Left cardiac atrium (tissue), 4 donors: ENCODE measurements at regions of chr17 and their contacts with region 1.

Region 1: GRCh38 chr17:10135539-10136257 is 62.7 kb downstream of the GAS7 start:
- DNase-seq: peak; percentile 65
- ATAC-seq: peak; percentile 65 to 79

Region 2: DNA sequence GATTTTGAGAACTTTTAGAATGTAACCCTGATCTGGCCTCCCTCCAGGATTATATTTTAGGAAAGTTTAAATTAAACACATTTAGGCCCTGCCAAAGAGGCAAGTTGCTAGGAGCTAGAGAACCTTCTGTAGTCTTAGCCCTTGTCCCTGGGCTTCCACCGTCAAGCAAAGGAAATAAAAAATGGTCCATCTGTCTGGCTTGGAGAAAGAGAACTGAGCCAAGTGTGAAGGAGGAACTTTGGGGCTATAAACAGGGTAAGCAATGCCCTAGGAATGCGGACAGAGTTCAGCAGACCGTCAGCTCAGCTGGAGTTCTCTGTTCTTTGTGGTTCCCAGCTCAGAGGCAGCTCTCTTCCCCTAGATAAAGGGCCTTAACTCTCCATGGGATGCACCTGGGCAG is 260.3 kb before region 1 on chr17:
- intact Hi-C with region 1: no loop called
- DNase-seq: no peak
- ATAC-seq: peak in 1 of 2 donors; percentile 81

Region 3: GRCh38 chr17:10072561-10073385 is 62.9 kb before region 1 on chr17:
- intact Hi-C with region 1: loop called in 1 of 2 experiments (anchors 10 kb)
- DNase-seq: no peak
- ATAC-seq: no peak